CD14-positive monocyte (primary cell): ENCODE measurements at regions of chr3 and their contacts with region 1.

Region 1: DNA sequence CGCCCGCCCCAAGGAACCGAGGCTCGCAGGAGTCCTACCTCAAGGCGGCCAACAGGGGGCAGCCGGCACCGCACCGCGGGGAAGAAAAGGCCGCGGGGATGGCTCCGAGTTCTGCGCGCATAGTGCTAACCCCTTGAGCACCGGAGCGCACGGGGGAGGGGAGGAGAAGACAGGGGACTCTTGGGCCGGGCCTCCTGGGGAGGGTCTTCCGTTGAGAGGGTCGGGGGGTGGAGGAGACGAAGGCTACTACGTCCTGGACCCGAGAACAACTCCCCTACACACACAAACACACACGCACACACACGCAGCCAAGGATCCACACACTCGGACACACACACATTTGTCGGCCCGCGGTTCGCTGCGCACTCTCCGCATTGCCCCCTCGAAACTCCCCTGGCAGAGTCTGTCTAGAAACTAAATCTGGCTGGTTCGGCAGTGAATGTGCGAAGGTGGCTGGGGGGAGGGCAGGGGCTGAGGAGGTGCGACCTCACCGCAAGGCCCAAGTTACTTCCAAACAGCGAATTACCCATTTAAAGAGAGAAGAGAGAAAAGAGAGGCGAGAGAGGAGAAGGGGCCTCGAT is 1.8 kb downstream of the WNT5A start:
- DNase-seq: peak; percentile 18 to 50 (median 37)
- H3K4me3 ChIP-seq: no peak overlapping the region
- H3K4me3 Mint-ChIP-seq: peak overlapping the region in 1 of 2 donors; percentile 85
- H3K27ac ChIP-seq: no peak overlapping the region
- H3K27ac Mint-ChIP-seq: peak overlapping the region in 1 of 7 donors; percentile 11
- H3K4me1 ChIP-seq: peaks cover 12 to 14% of the 10 kb centered on the region in 2 donors
- H3K4me1 Mint-ChIP-seq: peaks cover 30% of the 10 kb centered on the region
- H3K27me3 ChIP-seq: peaks cover 82 to 98% of the 10 kb centered on the region in 2 donors
- H3K27me3 Mint-ChIP-seq: peaks cover 93 to 98% (median 96%) of the 10 kb centered on the region in 3 donors
- CTCF ChIP-seq: peak; percentile 80

Region 2: DNA sequence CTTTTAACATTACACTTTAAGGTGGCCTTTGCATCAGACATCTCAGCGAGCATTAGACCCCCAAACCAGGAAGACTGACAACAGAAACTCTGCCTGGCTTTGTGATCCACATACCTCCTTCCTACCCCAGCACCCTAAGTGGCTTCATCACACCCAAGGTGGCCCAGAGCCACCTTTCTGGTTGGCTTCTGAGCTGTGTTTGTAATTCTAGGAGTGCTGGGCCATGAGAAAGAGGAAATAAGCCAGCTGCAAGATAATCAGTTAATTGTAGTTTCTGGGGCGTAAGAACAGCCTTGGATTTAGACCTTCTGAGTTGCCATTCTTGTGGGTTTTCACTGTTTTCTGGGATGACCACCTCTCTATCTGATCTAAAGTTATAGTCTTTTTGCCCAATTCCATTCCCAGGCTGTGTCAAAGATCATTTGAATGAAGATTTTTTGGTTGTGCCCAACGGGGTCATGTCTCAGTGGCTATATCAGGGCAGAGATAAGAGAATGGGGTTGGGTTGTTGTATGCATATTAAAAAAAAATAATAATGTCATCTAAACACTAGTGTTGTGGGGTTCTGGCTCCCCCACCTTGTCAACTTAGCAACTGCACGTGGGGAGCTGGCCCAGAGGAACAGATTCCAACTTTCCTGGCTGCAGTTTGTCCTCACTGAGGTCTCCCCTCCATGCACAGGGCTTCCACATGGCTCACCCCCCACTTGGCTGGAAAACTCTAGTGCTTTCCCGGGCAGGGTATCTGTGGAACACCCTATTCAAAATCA is 236.6 kb after region 1 on chr3:
- intact Hi-C with region 1: loop called in 1 of 2 experiments (anchors 5 kb)
- DNase-seq: peak in 2 of 3 donors; percentile 9 to 13
- H3K4me3 ChIP-seq: no peak overlapping the region
- H3K4me3 Mint-ChIP-seq: no peak overlapping the region
- H3K27ac ChIP-seq: no peak overlapping the region
- H3K27ac Mint-ChIP-seq: peak overlapping the region in 1 of 7 donors; percentile 40
- H3K4me1 ChIP-seq: no peaks in the 10 kb centered on the region
- H3K4me1 Mint-ChIP-seq: no peaks in the 10 kb centered on the region
- H3K27me3 ChIP-seq: peaks cover 0 to 11% of the 10 kb centered on the region in 2 donors
- H3K27me3 Mint-ChIP-seq: peaks cover 2 to 25% (median 6%) of the 10 kb centered on the region in 3 donors
- CTCF ChIP-seq: peak; percentile 31

Region 3: DNA sequence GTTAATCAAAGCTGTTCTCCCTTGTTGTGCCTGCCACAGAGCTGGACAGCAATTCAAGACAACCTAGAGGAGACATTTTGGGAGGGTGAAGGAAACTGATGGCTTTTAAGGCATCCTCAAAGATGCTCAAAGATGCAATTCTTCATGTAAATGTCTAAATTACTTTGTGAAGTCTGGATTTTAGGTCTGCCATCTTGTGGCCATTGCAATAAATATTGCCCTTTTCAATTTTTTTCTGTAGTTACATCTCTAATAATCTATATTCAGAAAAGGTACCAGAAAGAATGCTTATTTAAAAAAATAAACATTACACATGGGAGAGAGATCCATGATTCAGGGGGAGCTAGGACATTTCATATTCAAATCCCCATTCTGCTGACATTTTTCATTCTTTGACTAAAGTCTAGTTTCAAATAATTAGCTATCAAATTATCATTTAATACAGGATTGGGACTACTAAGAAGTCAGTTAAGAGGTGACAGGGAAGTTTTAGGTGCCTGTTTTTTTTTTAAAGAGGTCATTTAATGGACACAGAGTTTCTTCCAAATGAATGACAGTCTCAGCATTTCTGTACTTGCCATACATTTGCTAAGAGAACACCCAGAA is 261.6 kb after region 1 on chr3:
- intact Hi-C with region 1: loop called in 1 of 2 experiments (anchors 10 kb)
- DNase-seq: no peak
- H3K4me3 ChIP-seq: no peak overlapping the region
- H3K4me3 Mint-ChIP-seq: no peak overlapping the region
- H3K27ac ChIP-seq: no peak overlapping the region
- H3K27ac Mint-ChIP-seq: no peak overlapping the region
- H3K4me1 ChIP-seq: no peaks in the 10 kb centered on the region
- H3K4me1 Mint-ChIP-seq: no peaks in the 10 kb centered on the region
- H3K27me3 ChIP-seq: no peaks in the 10 kb centered on the region
- H3K27me3 Mint-ChIP-seq: peaks cover 3 to 5% (median 3%) of the 10 kb centered on the region in 3 donors
- CTCF ChIP-seq: peak; percentile 28

Region 4: DNA sequence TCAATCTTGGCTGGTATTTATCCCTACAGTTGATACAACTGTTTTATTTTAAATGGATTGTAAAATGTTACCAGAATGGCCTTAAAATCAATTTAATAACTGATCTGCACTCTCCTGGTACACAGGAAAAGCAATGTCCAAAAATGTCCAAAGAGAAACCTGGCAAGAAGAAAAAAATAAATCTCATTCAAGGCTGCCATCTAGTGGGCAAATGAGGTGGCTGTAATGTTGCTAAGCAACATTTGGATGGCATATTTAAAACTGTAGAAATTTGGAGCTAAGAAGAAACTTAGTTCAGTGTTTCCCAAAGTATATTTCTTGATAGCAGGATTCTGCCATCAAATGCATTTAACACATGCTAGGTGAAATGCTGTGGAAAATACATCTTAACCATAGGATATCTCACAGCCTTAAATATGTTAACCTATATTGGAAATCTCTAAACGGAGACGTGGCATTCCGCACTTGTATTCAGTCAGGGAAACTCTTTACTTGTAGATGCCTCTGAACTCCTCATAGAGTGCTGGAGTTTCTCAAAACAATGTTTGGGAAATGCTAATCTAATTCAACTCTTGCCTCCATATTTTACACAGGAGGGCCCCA is 766.1 kb after region 1 on chr3:
- intact Hi-C with region 1: loop called (anchors 5 kb)
- DNase-seq: peak; percentile 2 to 23 (median 15)
- H3K4me3 ChIP-seq: no peak overlapping the region
- H3K4me3 Mint-ChIP-seq: no peak overlapping the region
- H3K27ac ChIP-seq: no peak overlapping the region
- H3K27ac Mint-ChIP-seq: no peak overlapping the region
- H3K4me1 ChIP-seq: no peaks in the 10 kb centered on the region
- H3K4me1 Mint-ChIP-seq: no peaks in the 10 kb centered on the region
- H3K27me3 ChIP-seq: peaks cover 0 to 2% of the 10 kb centered on the region in 2 donors
- H3K27me3 Mint-ChIP-seq: peaks cover 0 to 6% (median 3%) of the 10 kb centered on the region in 3 donors
- CTCF ChIP-seq: peak; percentile 79